GM12878 (cell line): ENCODE measurements at regions of chr12 and their contacts with region 1.

Region 1: DNA sequence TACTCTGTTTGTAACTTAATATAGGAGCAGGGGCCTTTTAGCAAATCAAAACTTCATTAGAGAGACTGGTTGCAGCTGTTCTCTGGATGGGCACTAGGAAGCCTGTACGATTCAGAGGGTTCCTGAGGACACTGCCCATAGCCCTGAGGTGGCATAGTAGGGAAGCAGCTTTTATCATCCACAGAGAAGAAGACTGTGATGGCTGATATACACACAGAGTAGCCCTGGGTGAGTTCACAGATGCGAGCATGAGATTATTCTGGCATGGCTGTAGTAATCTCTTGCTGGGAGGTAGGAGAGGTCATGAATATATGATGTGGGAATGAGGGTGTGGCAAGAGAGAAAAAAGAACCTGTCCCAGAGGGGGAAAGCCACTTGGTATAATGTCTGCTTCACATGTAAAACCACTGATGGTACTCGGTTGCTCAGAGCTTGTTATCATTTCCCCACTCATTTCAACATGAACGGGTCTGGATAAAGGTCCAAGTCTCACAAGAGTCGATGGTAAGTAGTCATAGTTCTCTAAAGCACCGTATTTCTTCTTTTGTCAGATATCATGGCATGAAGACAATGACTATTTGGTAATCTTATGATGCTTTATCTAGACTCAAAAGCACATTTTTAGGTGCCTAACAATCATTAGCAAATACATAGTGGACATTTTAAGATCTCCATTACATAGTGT is 52.0 kb downstream of the PEBP1 start:
- DNase-seq: no peak
- ATAC-seq: no peak
- H3K4me3 ChIP-seq: no peak overlapping the region
- H3K27ac ChIP-seq: no peak overlapping the region
- H3K4me1 ChIP-seq: peaks cover 23% of the 10 kb centered on the region
- H3K27me3 ChIP-seq: no peaks in the 10 kb centered on the region
- CTCF ChIP-seq: no peak
- EP300 ChIP-seq: no peak
- POLR2A ChIP-seq: no peak
- RAD21 ChIP-seq: no peak

Region 2: DNA sequence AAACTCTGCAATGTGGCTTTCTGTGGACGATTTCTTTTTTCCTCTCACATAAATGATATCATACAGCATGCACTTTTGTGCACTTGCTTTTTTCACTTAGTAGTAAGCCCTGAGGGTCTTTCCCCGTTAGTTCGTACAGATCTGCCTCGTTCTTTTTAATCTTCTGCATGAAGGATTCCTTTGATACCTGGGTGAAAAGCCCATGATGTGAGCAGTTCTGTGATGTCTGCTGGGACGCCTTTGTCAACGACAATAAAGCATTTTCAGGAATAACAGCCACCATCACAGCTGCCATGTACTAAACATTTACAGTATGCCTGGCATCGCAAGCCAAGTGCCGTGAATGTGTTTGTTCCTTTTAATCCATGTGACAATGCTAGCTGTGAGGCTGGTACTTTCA is 318.3 kb before region 1 on chr12:
- CTCF ChIA-PET with region 1: no interaction called
- POLR2A ChIA-PET with region 1: no interaction called
- RAD21 ChIA-PET with region 1: no interaction called
- SMC1A ChIA-PET with region 1: no interaction called
- in situ Hi-C with region 1: no loop called
- intact Hi-C with region 1: no loop called
- DNase-seq: no peak
- ATAC-seq: no peak
- H3K4me3 ChIP-seq: no peak overlapping the region
- H3K27ac ChIP-seq: no peak overlapping the region
- H3K4me1 ChIP-seq: no peaks in the 10 kb centered on the region
- H3K27me3 ChIP-seq: no peaks in the 10 kb centered on the region
- CTCF ChIP-seq: no peak
- EP300 ChIP-seq: no peak
- POLR2A ChIP-seq: no peak
- RAD21 ChIP-seq: no peak

Region 3: DNA sequence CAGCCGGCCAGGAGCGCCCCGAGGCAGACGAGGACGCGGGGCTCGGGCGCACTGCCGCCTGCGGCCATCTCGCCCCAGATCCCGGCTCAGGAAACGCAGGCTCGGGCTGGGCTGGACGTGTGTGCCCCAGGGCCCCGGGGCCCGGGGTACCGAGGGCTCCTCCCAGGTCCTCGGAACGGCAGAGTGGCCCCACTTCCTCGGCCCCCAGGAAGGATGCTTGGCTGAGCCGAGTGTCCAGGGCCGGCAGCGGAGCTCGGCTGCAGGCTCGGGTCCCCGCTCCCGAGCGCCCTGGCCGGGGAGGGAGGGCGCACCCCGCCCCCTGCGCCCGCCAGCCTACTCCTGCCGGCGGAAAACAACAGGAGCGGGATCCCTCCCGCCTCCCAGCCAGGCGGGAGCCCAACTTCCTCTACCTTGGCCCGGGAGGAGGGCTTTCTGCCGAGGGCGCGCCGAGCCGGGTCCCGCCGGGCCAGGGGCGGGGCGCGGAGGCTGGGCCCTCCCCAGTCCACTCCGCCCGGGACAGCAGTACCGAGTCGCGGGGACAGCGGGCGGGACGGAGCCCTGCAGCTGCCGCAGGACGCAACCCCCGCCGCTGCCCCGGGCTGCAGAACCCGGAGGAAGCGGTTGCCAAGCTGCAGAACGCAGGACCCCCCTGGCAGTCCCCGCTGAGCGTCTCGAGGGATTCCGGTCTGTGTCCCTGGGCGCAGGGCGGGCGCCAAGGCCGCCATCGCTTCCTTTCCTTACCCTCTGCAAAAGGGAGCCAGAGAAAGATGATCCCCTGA is 84.1 kb before region 1 on chr12 and contains the start of gene VSIG10:
- CTCF ChIA-PET with region 1: no interaction called
- POLR2A ChIA-PET with region 1: no interaction called
- RAD21 ChIA-PET with region 1: no interaction called
- SMC1A ChIA-PET with region 1: no interaction called
- in situ Hi-C with region 1: no loop called
- intact Hi-C with region 1: no loop called
- DNase-seq: no peak
- ATAC-seq: peak; percentile 81
- H3K4me3 ChIP-seq: peak within 1 kb of the TSS; percentile 84
- H3K27ac ChIP-seq: no peak within 1 kb of the TSS
- H3K4me1 ChIP-seq: no peaks in the 10 kb centered on the region; the same call in 1 of the 2 replicates
- H3K27me3 ChIP-seq: peaks cover 5 to 10% of the 10 kb centered on the region in 2 experiments; a peak in 3 of 4 replicates
- CTCF ChIP-seq: no peak
- EP300 ChIP-seq: no peak
- POLR2A ChIP-seq: peak; percentile 14; the same call in 1 of the 2 replicates
- RAD21 ChIP-seq: no peak
- polyA plus RNA-seq, gene VSIG10: 4.5 to 6.8 TPM

Region 4: GRCh38 chr12:118120579-118121363 is 67.1 kb before region 1 on chr12:
- CTCF ChIA-PET with region 1: interaction called, 19 read pairs
- POLR2A ChIA-PET with region 1: interaction called, 3 read pairs
- RAD21 ChIA-PET with region 1: interaction called, 23 read pairs
- SMC1A ChIA-PET with region 1: interaction called, 24 read pairs
- in situ Hi-C with region 1: no loop called
- intact Hi-C with region 1: no loop called
- DNase-seq: no peak
- ATAC-seq: peak; percentile 97
- H3K4me3 ChIP-seq: no peak overlapping the region
- H3K27ac ChIP-seq: peak overlapping the region; percentile 83
- H3K4me1 ChIP-seq: no peaks in the 10 kb centered on the region; the same call in 1 of the 2 replicates
- H3K27me3 ChIP-seq: no peaks in the 10 kb centered on the region
- CTCF ChIP-seq: peak; percentile 50 to 70 (median 64)
- EP300 ChIP-seq: no peak
- POLR2A ChIP-seq: no peak
- RAD21 ChIP-seq: peak; percentile 70

Region 5: GRCh38 chr12:118164798-118165486 is 23.0 kb before region 1 on chr12:
- CTCF ChIA-PET with region 1: interaction called, 64 read pairs
- POLR2A ChIA-PET with region 1: interaction called, 3 read pairs
- RAD21 ChIA-PET with region 1: interaction called, 5 read pairs
- SMC1A ChIA-PET with region 1: interaction called, 15 read pairs
- in situ Hi-C with region 1: no loop called
- intact Hi-C with region 1: no loop called
- DNase-seq: no peak
- ATAC-seq: 0 out of 3 replicates have a peak, but pooled peaks have one; percentile 13
- H3K4me3 ChIP-seq: no peak overlapping the region
- H3K27ac ChIP-seq: no peak overlapping the region
- H3K4me1 ChIP-seq: peaks cover 24% of the 10 kb centered on the region
- H3K27me3 ChIP-seq: no peaks in the 10 kb centered on the region
- CTCF ChIP-seq: peak; percentile 45 to 56 (median 45)
- EP300 ChIP-seq: no peak
- POLR2A ChIP-seq: no peak
- RAD21 ChIP-seq: peak; percentile 72

Region 6: GRCh38 chr12:118206107-118206412 is 18.2 kb after region 1 on chr12:
- CTCF ChIA-PET with region 1: interaction called, 30 read pairs
- POLR2A ChIA-PET with region 1: interaction called, 11 read pairs
- RAD21 ChIA-PET with region 1: interaction called, 64 read pairs
- SMC1A ChIA-PET with region 1: interaction called, 50 read pairs
- in situ Hi-C with region 1: no loop called
- intact Hi-C with region 1: no loop called
- DNase-seq: no peak
- ATAC-seq: peak; percentile 14
- H3K4me3 ChIP-seq: no peak overlapping the region
- H3K27ac ChIP-seq: peak overlapping the region; percentile 51
- H3K4me1 ChIP-seq: peaks cover 8% of the 10 kb centered on the region
- H3K27me3 ChIP-seq: no peaks in the 10 kb centered on the region
- CTCF ChIP-seq: no peak
- EP300 ChIP-seq: no peak
- POLR2A ChIP-seq: no peak
- RAD21 ChIP-seq: no peak

Region 7: GRCh38 chr12:118307069-118307954 is 119.4 kb after region 1 on chr12:
- CTCF ChIA-PET with region 1: interaction called, 17 read pairs
- POLR2A ChIA-PET with region 1: interaction called, 3 read pairs
- RAD21 ChIA-PET with region 1: interaction called, 7 read pairs
- SMC1A ChIA-PET with region 1: interaction called, 17 read pairs
- in situ Hi-C with region 1: no loop called
- intact Hi-C with region 1: loop called (anchors 2 kb)
- DNase-seq: peak; percentile 69
- ATAC-seq: peak; percentile 78
- H3K4me3 ChIP-seq: peak overlapping the region; percentile 64
- H3K27ac ChIP-seq: peak overlapping the region; percentile 98
- H3K4me1 ChIP-seq: peaks cover 38% of the 10 kb centered on the region
- H3K27me3 ChIP-seq: no peaks in the 10 kb centered on the region
- CTCF ChIP-seq: no peak
- EP300 ChIP-seq: no peak; a peak in 1 of 4 replicates
- POLR2A ChIP-seq: no peak
- RAD21 ChIP-seq: no peak

Region 8: GRCh38 chr12:118346895-118347294 is 159.0 kb after region 1 on chr12:
- CTCF ChIA-PET with region 1: interaction called, 6 read pairs
- POLR2A ChIA-PET with region 1: interaction called, 5 read pairs
- RAD21 ChIA-PET with region 1: interaction called, 16 read pairs
- SMC1A ChIA-PET with region 1: interaction called, 3 read pairs
- in situ Hi-C with region 1: no loop called
- intact Hi-C with region 1: no loop called
- DNase-seq: no peak
- ATAC-seq: peak; percentile 89
- H3K4me3 ChIP-seq: no peak overlapping the region; the same call in 1 of the 2 replicates
- H3K27ac ChIP-seq: peak overlapping the region; percentile 21
- H3K4me1 ChIP-seq: peaks cover 21% of the 10 kb centered on the region; the same call in 1 of the 2 replicates
- H3K27me3 ChIP-seq: no peaks in the 10 kb centered on the region
- CTCF ChIP-seq: no peak
- EP300 ChIP-seq: no peak
- POLR2A ChIP-seq: no peak
- RAD21 ChIP-seq: no peak